ENCODE measurements at regions of chr12 and their contacts with region 1.

Region 1: DNA sequence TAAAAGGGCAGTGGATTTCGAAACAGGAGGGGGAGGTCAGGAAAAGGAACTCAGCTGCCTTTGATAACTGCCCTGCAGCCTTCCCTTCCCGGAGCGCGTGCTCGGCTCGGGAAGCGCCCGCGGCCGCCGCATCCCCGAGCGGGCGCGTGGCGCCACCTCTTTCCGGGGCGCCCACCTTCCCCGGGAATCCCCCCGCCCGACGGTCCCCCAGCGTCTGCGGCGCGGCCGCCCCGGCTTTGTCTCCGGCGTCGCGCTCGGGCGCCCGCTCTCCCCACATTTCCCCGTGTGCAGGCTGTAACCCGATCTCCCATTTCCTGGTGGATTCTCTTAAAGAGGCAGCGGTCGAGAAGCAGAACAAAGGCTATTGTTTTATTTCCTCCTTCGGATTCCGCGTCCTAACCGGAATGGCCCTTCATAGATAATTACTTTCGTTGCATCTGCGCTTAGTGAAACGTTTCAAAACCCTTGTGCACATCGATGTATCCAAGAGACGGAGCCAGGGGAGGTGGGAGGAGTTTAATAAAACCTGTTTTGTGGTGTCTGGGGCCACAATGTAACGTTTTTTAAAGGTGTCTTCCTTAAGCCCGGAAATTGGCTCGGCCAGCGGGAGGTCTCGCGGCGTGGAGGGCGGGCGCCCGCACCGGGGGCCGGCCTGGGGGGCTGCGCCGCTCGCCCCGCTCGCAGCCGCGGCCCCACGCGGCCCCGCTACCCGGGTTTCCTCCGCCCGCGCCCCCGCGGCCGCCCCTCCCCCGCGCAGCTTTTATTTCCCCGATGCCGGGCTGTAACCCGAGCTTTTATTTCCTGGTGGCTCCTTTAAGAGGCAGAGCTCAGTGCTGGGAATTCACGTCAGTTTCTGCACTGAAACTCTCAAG is at the start of gene ETV6:
- DNase-seq: peak; percentile 74
- H3K4me3 Mint-ChIP-seq: peak within 1 kb of the TSS; percentile 95
- H3K27ac Mint-ChIP-seq: peak within 1 kb of the TSS; percentile 99
- H3K4me1 Mint-ChIP-seq: peaks cover 29% of the 10 kb centered on the region
- H3K27me3 Mint-ChIP-seq: peaks cover 3% of the 10 kb centered on the region
- total RNA-seq, gene ETV6: 117 and 131 TPM in 2 replicates

Region 2: DNA sequence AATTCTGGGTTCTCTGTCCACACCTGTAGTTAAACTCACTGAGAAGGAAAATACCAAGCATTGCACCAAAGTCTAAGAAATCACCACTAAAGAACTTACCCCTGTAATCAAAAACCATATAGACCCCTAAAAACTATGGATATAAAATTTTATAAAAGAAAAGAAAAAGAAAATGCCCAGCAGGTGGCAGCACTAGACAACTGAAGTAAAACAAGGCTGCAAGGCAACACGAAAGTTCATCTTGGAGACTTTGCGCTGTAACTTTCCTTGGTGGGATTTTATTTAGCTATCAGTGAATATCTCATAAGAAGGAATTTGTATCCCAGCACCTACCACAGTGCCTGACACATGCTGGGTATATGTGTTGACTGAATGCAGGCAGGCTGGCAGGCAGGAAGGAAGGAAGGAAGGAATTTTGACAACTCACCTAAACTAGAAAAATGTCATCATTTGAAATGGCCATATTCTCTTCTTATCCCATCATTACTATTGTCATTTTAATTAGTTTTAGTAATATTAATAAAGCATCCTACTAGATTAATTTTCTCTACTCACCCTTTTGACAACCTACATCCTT is 67.8 kb before region 1 on chr12:
- intact Hi-C with region 1: loop called (anchors 1 kb)
- DNase-seq: peak; percentile 20
- H3K4me3 Mint-ChIP-seq: peak overlapping the region; percentile 59
- H3K27ac Mint-ChIP-seq: peak overlapping the region; percentile 80
- H3K4me1 Mint-ChIP-seq: peaks cover 24% of the 10 kb centered on the region
- H3K27me3 Mint-ChIP-seq: peaks cover 7% of the 10 kb centered on the region

Region 3: GRCh38 chr12:11730299-11731041 is 81.4 kb after region 1 on chr12:
- intact Hi-C with region 1: loop called (anchors 1 kb)
- DNase-seq: no peak
- H3K4me3 Mint-ChIP-seq: peak overlapping the region; percentile 66
- H3K27ac Mint-ChIP-seq: peak overlapping the region; percentile 86
- H3K4me1 Mint-ChIP-seq: peaks cover 93% of the 10 kb centered on the region
- H3K27me3 Mint-ChIP-seq: no peaks in the 10 kb centered on the region

Region 4: DNA sequence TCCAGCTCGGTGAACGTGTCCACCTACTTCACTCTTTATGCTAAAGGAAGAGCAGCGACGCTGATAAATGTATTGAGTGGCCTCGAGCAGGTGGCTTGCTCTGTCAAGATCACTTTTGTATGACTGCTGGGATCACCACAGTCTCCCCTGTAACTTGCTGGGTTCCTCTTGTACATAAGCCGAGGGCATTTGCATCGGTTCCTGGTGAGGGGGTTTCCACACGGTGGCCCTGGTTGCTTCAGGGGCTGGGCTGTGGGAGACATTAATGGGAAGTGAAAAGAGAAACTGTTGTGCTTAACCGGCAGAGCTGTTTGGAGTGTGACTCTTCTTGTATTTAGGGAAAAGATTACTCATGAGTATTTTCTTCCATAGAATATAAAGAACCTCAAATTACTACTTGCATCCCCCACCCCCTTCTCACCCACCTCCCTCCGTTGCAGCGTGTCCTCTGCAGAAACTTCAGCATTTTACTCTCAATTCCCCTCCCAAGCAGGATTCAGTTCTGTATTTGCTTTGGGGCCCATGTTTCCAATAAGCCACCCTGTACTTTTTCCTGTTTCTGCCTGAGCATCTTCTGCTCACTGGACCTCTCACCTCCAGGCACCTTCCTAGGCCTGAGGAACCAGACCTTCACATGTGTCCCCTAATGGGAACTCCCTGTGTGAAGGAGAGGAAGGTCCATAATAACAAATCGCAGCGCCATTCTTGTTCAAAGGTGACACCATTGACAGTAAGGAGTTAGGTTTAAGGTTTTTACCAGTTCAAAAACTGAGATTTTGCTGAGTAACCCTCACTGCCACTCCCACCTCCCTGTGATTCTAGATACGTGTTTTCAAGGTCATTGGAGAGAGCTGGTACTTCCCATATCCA is 187.4 kb after region 1 on chr12:
- intact Hi-C with region 1: loop called (anchors 1 kb)
- DNase-seq: peak; percentile 53
- H3K4me3 Mint-ChIP-seq: peak overlapping the region; percentile 67
- H3K27ac Mint-ChIP-seq: peak overlapping the region; percentile 94
- H3K4me1 Mint-ChIP-seq: peaks cover 91% of the 10 kb centered on the region
- H3K27me3 Mint-ChIP-seq: no peaks in the 10 kb centered on the region

Region 5: DNA sequence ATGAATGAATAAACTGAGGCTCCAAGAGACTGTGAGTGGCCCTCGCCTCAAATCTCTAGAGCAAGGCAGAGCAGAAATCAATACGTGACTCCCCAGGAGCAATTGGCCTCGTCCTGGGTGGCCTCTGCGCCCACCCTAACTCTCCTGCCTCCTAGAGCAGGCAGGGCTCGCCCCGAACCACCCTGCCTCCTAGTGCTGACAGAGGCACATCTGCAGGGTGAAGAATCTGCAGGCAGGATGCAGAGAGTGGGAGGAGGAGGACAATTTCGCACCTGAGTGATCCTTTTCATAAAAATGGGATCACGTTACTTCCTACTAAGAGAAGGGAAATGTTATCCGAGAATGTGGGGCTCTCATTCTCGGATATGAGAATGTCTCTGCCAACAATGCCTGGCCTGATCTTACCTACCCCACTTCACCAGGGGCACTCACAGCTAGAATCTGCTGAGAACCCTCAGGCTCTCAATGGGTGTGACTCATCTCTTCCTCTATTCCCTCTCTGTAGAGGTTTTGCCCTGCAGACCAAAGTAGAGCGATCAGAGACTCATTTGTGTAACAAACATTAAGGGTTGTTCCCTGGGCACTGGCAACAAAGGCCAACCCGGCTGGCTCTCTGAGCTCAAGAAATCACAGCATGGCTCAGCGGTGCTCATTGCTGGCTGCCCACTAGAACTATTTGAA is 360.0 kb after region 1 on chr12:
- intact Hi-C with region 1: loop called (anchors 1 kb)
- DNase-seq: peak; percentile 56
- H3K4me3 Mint-ChIP-seq: peak overlapping the region; percentile 73
- H3K27ac Mint-ChIP-seq: peak overlapping the region; percentile 97
- H3K4me1 Mint-ChIP-seq: peaks cover 88% of the 10 kb centered on the region
- H3K27me3 Mint-ChIP-seq: peaks cover 1% of the 10 kb centered on the region

Region 6: GRCh38 chr12:12696562-12697383 is 1047.7 kb after region 1 on chr12:
- intact Hi-C with region 1: loop called (anchors 5 kb)
- DNase-seq: peak; percentile 91
- H3K4me3 Mint-ChIP-seq: peak overlapping the region; percentile 96
- H3K27ac Mint-ChIP-seq: peak overlapping the region; percentile 89
- H3K4me1 Mint-ChIP-seq: peaks cover 49% of the 10 kb centered on the region
- H3K27me3 Mint-ChIP-seq: no peaks in the 10 kb centered on the region